ENCODE measurements at regions of chr10 and their contacts with region 1.

Region 1: DNA sequence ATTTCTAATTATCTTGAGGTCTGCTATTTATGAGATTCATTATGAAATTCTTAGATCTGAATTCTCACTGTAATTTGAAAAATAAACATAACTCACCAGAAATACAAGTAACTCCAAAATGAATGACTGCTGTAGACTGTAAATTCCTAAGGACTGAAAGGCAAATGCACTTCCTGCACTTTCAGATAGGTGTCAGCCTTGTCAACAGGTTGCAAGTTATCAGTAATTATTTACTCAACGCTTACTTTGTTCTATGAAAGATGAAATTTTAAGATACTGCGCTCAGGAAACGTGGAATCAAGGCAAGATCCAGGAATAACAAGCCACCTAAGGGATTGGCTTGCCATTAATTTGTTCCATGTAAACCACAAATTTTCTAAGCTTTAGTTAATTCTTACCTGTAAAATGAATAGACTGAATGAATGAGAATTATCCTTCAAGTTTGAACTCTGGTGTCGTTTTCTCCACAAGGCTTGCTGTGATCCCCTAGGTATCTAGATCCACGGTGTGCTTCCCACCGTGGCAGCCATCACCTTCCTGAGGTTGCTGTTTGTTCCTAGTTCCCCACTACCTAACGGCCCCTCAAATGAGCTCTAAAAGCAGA is 12.6 kb downstream of the DHX32 start:
- DNase-seq: peak; percentile 65
- ATAC-seq: peak; percentile 44; the same call in 1 of the 2 replicates
- H3K4me3 ChIP-seq: no peak overlapping the region
- H3K27ac ChIP-seq: no peak overlapping the region
- H3K4me1 ChIP-seq: peaks cover 13% of the 10 kb centered on the region
- H3K27me3 ChIP-seq: no peaks in the 10 kb centered on the region
- CTCF ChIP-seq: peak; percentile 75
- POLR2A ChIP-seq: no peak
- RAD21 ChIP-seq: peak; percentile 87

Region 2: GRCh38 chr10:125396676-125397075 is 471.8 kb before region 1 on chr10:
- CTCF ChIA-PET with region 1: no interaction called
- POLR2A ChIA-PET with region 1: no interaction called
- dilution Hi-C with region 1: no loop called
- in situ Hi-C with region 1: no loop called
- intact Hi-C with region 1: no loop called
- DNase-seq: peak; percentile 32
- ATAC-seq: no peak
- H3K4me3 ChIP-seq: no peak overlapping the region
- H3K27ac ChIP-seq: no peak overlapping the region
- H3K4me1 ChIP-seq: no peaks in the 10 kb centered on the region
- H3K27me3 ChIP-seq: peaks cover 5% of the 10 kb centered on the region; the same call in 1 of the 2 replicates
- CTCF ChIP-seq: no peak
- POLR2A ChIP-seq: no peak
- RAD21 ChIP-seq: no peak

Region 3: DNA sequence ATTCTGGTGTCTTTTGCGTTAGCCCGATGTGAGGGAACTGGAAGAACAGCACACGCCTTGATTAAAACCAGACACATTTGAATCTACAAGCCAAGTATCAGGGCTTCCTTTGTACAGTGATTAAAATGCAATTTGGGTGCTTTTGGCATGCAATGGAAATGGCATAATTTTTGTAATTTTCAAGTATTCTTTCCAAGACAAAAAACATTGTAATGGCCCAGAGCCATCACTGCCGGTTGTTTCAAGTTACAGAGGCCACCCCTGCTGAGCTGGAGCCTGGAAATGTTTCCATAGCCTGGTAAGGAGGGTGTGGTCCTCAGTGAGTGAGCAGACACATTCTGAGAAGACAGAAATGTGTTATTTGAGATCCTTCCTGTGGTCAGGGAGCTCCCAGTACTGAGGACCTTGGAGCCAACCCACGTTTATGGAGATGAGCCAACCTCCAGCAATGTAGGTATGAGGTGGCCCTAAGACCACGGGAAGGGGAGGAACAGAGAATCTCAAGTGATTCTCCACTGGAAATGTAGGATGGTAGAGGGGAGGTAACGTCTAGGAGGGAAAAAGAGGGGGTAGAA is 206.4 kb before region 1 on chr10:
- CTCF ChIA-PET with region 1: no interaction called
- POLR2A ChIA-PET with region 1: no interaction called
- dilution Hi-C with region 1: no loop called
- in situ Hi-C with region 1: no loop called
- intact Hi-C with region 1: no loop called
- DNase-seq: peak; percentile 55
- ATAC-seq: peak; percentile 51; the same call in 1 of the 2 replicates
- H3K4me3 ChIP-seq: no peak overlapping the region
- H3K27ac ChIP-seq: no peak overlapping the region
- H3K4me1 ChIP-seq: no peaks in the 10 kb centered on the region
- H3K27me3 ChIP-seq: no peaks in the 10 kb centered on the region
- CTCF ChIP-seq: no peak
- POLR2A ChIP-seq: no peak
- RAD21 ChIP-seq: no peak

Region 4: DNA sequence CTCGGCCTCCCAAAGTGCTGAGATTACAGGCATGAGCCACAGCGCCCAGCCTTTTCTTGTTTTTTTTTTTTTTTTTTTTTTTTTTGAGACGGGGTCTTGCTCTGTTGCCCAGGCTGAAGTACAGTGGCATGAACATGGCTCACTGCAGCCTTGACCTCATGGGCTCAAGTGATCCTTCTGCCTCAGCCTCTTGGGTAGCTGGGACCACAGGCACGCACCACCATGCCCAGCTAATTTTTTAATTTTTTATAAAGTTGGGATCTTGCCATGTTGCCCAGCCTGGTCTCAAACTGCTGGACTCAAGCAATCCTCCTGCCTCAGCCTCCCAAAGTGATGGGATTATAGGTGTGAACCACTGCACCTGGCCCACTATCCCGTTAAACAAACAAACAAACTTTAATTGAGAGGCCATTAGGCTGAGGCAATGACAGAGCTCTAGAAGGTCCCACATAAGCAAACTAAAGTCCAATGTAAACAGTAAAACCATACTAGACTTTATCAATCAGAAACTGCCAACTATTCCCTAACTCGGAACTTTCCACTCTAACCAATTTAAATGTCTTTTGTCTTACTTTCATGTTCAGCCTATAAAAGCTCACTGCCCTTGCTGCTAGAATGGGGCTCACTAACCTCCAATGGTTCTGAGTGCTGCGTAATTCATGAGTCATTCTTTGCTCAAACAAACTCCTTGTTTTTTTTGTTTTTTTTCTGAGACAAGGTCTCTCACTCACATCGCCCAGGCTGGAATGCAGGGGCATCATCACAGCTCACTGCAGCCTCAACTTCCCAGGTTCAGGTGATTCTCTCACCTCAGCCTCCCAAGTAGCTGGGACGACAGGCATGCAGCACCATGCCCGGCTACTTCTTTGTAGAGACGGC is 10.7 kb after region 1 on chr10:
- CTCF ChIA-PET with region 1: no interaction called
- POLR2A ChIA-PET with region 1: interaction called, 3 read pairs
- dilution Hi-C with region 1: no loop called
- in situ Hi-C with region 1: no loop called
- intact Hi-C with region 1: loop called (anchors 1 kb)
- DNase-seq: peak; percentile 96
- ATAC-seq: peak; percentile 95
- H3K4me3 ChIP-seq: no peak overlapping the region
- H3K27ac ChIP-seq: peak overlapping the region; percentile 62; the same call in 1 of the 2 replicates
- H3K4me1 ChIP-seq: peaks cover 10% of the 10 kb centered on the region
- H3K27me3 ChIP-seq: no peaks in the 10 kb centered on the region
- CTCF ChIP-seq: no peak
- POLR2A ChIP-seq: no peak
- RAD21 ChIP-seq: no peak

Region 5: GRCh38 chr10:125928928-125929585 is 60.6 kb after region 1 on chr10:
- CTCF ChIA-PET with region 1: interaction called, 11 read pairs
- POLR2A ChIA-PET with region 1: no interaction called
- dilution Hi-C with region 1: no loop called
- in situ Hi-C with region 1: no loop called
- intact Hi-C with region 1: no loop called
- DNase-seq: no peak
- ATAC-seq: no peak
- H3K4me3 ChIP-seq: no peak overlapping the region
- H3K27ac ChIP-seq: no peak overlapping the region
- H3K4me1 ChIP-seq: no peaks in the 10 kb centered on the region
- H3K27me3 ChIP-seq: no peaks in the 10 kb centered on the region; the same call in 1 of the 2 replicates
- CTCF ChIP-seq: no peak
- POLR2A ChIP-seq: no peak
- RAD21 ChIP-seq: no peak

Region 6: DNA sequence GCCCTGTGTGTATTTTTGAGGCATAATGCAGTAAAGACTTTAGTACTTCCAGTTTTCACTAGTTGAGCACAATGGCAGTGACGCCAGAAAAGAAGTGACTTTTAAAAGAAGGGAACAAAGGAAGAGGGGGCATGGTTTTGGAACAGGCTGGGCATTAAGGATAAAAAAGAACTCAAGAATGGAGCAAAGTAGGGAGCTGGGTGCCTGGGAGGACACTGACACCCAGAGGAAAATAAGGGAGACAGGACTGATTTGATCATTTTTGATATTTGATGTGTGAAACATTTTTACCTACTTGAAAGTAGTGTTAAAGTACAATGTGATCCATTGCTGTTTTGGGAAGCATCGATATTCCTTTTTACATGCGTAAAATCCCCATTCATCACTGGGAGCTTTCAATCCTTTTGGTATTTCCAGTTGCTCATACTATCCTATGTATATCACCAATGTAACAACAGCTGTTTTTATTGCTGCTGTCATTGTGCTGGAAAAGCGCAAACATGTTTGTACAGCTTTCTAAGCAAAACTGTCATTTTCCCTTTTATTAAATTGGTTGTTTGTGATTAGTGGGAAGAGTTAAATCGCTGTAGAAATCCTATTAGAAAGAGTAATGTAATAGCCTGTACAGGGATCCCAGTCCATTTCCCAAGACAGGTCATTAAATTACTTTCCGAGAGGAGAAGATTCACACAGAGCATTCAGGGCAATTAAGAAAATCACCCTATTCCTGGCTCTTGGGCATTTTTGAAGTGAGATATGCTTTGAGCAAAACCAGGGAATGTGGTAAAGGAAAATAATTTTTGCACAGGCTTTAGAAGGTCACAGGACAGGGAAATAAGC is 434.6 kb after region 1 on chr10:
- CTCF ChIA-PET with region 1: no interaction called
- POLR2A ChIA-PET with region 1: no interaction called
- dilution Hi-C with region 1: no loop called
- in situ Hi-C with region 1: no loop called
- intact Hi-C with region 1: loop called (anchors 5 kb)
- DNase-seq: peak; percentile 4
- ATAC-seq: no peak
- H3K4me3 ChIP-seq: no peak overlapping the region
- H3K27ac ChIP-seq: no peak overlapping the region
- H3K4me1 ChIP-seq: no peaks in the 10 kb centered on the region
- H3K27me3 ChIP-seq: no peaks in the 10 kb centered on the region; the same call in 1 of the 2 replicates
- CTCF ChIP-seq: peak; percentile 30
- POLR2A ChIP-seq: no peak
- RAD21 ChIP-seq: peak; percentile 49

Region 7: DNA sequence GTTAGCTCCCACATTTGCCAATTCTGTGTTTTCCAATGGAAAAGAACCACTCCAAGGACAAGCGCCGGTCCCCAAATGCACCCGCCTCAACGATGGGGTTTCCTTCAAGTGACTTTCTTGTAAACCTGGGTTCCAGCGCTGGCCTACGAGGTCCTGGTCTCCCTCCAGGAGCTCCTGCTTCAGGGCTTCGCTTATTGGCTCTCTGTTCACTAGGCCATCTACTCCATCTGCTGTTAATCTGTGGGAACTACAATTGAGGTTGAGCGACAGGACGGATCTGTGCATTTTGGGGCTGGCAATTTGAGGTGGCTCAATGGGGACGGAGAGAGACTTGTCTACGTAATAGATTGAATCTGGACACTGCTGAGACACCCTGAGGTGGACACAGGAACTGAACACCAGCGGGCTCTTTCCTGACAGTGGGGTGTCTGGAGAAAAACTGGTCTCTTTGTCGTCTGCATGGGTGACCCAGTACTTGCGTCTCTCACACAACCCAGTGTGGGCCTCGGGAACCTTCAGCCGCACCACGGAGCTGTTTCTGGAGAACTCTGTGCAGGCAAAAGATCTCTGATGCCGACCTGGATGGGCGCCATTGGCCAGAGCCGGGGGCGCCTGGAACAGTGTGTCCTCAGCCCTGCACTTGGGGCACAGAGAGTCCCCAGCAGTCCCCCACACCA is 635.7 kb after region 1 on chr10:
- CTCF ChIA-PET with region 1: no interaction called
- POLR2A ChIA-PET with region 1: no interaction called
- dilution Hi-C with region 1: no loop called
- in situ Hi-C with region 1: no loop called
- intact Hi-C with region 1: loop called (anchors 1 kb)
- DNase-seq: peak; percentile 64
- ATAC-seq: peak; percentile 93
- H3K4me3 ChIP-seq: no peak overlapping the region
- H3K27ac ChIP-seq: no peak overlapping the region
- H3K4me1 ChIP-seq: peaks cover 3% of the 10 kb centered on the region; the same call in 1 of the 2 replicates
- H3K27me3 ChIP-seq: peaks cover 6% of the 10 kb centered on the region; the same call in 1 of the 2 replicates
- CTCF ChIP-seq: peak; percentile 79
- POLR2A ChIP-seq: no peak
- RAD21 ChIP-seq: peak; percentile 93

Region 8: GRCh38 chr10:126749015-126749655 is 880.7 kb after region 1 on chr10:
- CTCF ChIA-PET with region 1: no interaction called
- POLR2A ChIA-PET with region 1: no interaction called
- dilution Hi-C with region 1: no loop called
- in situ Hi-C with region 1: no loop called
- intact Hi-C with region 1: loop called (anchors 5 kb)
- DNase-seq: peak; percentile 75
- ATAC-seq: peak; percentile 99
- H3K4me3 ChIP-seq: no peak overlapping the region
- H3K27ac ChIP-seq: no peak overlapping the region
- H3K4me1 ChIP-seq: no peaks in the 10 kb centered on the region
- H3K27me3 ChIP-seq: no peaks in the 10 kb centered on the region
- CTCF ChIP-seq: peak; percentile 75
- POLR2A ChIP-seq: no peak
- RAD21 ChIP-seq: peak; percentile 78

Measured in IMR-90 (cell line).